Lower leg skin (tissue), 4 donors: ENCODE measurements at regions of chr9 and their contacts with region 1.

Region 1: GRCh38 chr9:118318770-118319431 is 614.7 kb downstream of the TLR4 start:
- DNase-seq: peak in 1 of 2 donors; percentile 15
- H3K4me3 ChIP-seq: no peak overlapping the region
- CTCF ChIP-seq: no peak
- POLR2A ChIP-seq: no peak

Region 2: GRCh38 chr9:118170032-118170955 is 148.6 kb before region 1 on chr9:
- intact Hi-C with region 1: no loop called
- DNase-seq: no peak
- H3K4me3 ChIP-seq: no peak overlapping the region
- CTCF ChIP-seq: no peak
- POLR2A ChIP-seq: no peak

Region 3: GRCh38 chr9:118271936-118272335 is 47.0 kb before region 1 on chr9:
- intact Hi-C with region 1: loop called (anchors 2 kb)
- DNase-seq: no peak
- H3K4me3 ChIP-seq: no peak overlapping the region
- CTCF ChIP-seq: no peak
- POLR2A ChIP-seq: no peak